Mammary epithelial cell (primary cell): ENCODE measurements at regions of chr7 and their contacts with region 1.

Region 1: GRCh38 chr7:116443101-116443523 is 56.4 kb upstream of the CAV2 start:
- DNase-seq: peak; percentile 90
- H3K4me3 ChIP-seq: no peak overlapping the region
- H3K27ac ChIP-seq: peak overlapping the region; percentile 98
- H3K4me1 ChIP-seq: peaks cover 30% of the 10 kb centered on the region
- H3K27me3 ChIP-seq: no peaks in the 10 kb centered on the region
- CTCF ChIP-seq: no peak

Region 2: GRCh38 chr7:116395125-116395791 is 47.9 kb before region 1 on chr7:
- CTCF ChIA-PET with region 1: no interaction called
- dilution Hi-C with region 1: no loop called
- in situ Hi-C with region 1: no loop called
- intact Hi-C with region 1: loop called (anchors 10 kb)
- DNase-seq: peak; percentile 93
- H3K4me3 ChIP-seq: peak overlapping the region in 1 of 3 experiments; percentile 2
- H3K27ac ChIP-seq: peak overlapping the region; percentile 98
- H3K4me1 ChIP-seq: peaks cover 32% of the 10 kb centered on the region
- H3K27me3 ChIP-seq: no peaks in the 10 kb centered on the region
- CTCF ChIP-seq: no peak

Region 3: DNA sequence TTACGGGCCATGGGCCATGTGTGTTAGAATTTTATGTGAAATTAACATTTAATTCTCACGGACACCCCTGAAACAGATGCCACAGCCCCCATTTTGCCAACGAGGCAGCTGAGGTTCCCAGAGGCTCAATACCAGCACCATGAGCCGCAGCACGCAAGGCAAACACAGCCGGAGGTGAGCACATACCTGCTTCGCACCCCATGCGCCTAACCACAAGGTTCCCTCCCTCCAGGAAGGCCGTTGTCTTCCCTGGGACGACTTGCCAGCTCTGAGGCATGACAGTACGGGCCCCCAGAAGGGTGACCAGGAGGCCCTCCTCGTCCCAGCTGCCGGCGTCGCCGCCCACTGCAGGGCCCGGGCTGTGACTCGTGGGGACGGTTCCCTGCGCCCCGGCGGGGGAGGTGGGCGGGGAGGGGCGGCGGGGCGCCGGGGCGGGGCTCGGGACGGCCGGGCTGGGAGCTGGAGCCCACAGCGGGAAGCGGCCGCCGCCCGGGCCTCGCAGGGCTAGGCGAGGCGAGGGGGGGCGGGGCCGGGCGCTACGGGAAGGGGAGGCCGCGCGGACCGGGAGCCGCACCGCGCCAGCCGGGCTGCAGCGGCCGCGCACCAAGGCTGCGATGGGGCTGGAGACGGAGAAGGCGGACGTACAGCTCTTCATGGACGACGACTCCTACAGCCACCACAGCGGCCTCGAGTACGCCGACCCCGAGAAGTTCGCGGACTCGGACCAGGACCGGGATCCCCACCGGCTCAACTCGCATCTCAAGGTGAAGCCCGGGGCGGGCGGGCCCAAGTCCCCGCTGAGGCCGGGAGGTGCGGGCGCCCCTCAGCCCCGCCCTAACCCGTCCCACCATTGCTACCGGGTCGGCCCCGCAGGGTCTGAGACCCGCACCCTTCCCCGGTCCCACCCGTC is 56.3 kb after region 1 on chr7 and contains the start of gene CAV2:
- CTCF ChIA-PET with region 1: interaction called, 4 read pairs
- dilution Hi-C with region 1: no loop called
- in situ Hi-C with region 1: no loop called
- intact Hi-C with region 1: loop called (anchors 1 kb)
- DNase-seq: peak; percentile 96
- H3K4me3 ChIP-seq: peak within 1 kb of the TSS; percentile 59 to 98 (median 80)
- H3K27ac ChIP-seq: peak within 1 kb of the TSS; percentile 99
- H3K4me1 ChIP-seq: peaks cover 34% of the 10 kb centered on the region
- H3K27me3 ChIP-seq: no peaks in the 10 kb centered on the region
- CTCF ChIP-seq: no peak
- total RNA-seq, gene CAV2: 253 to 385 TPM

Region 4: GRCh38 chr7:116670409-116671015 is 227.4 kb after region 1 on chr7:
- CTCF ChIA-PET with region 1: no interaction called
- dilution Hi-C with region 1: no loop called
- in situ Hi-C with region 1: no loop called
- intact Hi-C with region 1: no loop called
- DNase-seq: peak; percentile 37
- H3K4me3 ChIP-seq: peak overlapping the region in 2 of 3 experiments; percentile 63 to 94
- H3K27ac ChIP-seq: peak overlapping the region; percentile 98
- H3K4me1 ChIP-seq: peaks cover 24% of the 10 kb centered on the region
- H3K27me3 ChIP-seq: no peaks in the 10 kb centered on the region
- CTCF ChIP-seq: no peak